ENCODE measurements at regions of chr16 and their contacts with region 1.

Region 1: GRCh38 chr16:22077700-22078313 is 14.5 kb upstream of the VWA3A start:
- DNase-seq: peak; percentile 37 to 78 (median 70)
- ATAC-seq: peak; percentile 69
- H3K4me3 ChIP-seq: no peak overlapping the region
- H3K4me3 Mint-ChIP-seq: no peak overlapping the region
- H3K27ac ChIP-seq: no peak overlapping the region
- H3K27ac Mint-ChIP-seq: no peak overlapping the region
- H3K4me1 ChIP-seq: no peaks in the 10 kb centered on the region
- H3K4me1 Mint-ChIP-seq: peaks cover 3% of the 10 kb centered on the region
- H3K27me3 ChIP-seq: no peaks in the 10 kb centered on the region
- H3K27me3 Mint-ChIP-seq: no peaks in the 10 kb centered on the region
- CTCF ChIP-seq: peak; percentile 78

Region 2: DNA sequence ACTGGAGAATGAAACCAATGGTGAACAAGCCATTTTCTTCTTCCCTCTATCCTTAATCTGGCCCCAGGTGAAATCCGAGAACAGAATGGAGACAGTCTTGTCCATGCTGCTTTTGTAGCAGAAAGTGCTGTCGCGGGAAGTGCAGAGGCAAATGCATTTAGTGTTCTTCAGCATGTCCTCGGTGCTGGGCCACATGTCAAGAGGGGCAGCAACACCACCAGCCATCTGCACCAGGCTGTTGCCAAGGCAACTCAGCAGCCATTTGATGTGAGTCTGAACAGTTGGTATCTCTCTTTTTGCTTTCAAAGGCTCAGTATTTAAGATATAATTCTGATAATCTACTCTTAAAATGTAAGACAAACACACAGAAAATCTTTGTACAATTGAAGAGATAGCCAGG is 106.0 kb before region 1 on chr16:
- CTCF ChIA-PET with region 1: no interaction called
- POLR2A ChIA-PET with region 1: no interaction called
- intact Hi-C with region 1: no loop called
- DNase-seq: no peak
- ATAC-seq: no peak
- H3K4me3 ChIP-seq: no peak overlapping the region
- H3K4me3 Mint-ChIP-seq: no peak overlapping the region
- H3K27ac ChIP-seq: no peak overlapping the region
- H3K27ac Mint-ChIP-seq: no peak overlapping the region
- H3K4me1 ChIP-seq: no peaks in the 10 kb centered on the region
- H3K4me1 Mint-ChIP-seq: no peaks in the 10 kb centered on the region
- H3K27me3 ChIP-seq: no peaks in the 10 kb centered on the region
- H3K27me3 Mint-ChIP-seq: no peaks in the 10 kb centered on the region
- CTCF ChIP-seq: no peak

Region 3: DNA sequence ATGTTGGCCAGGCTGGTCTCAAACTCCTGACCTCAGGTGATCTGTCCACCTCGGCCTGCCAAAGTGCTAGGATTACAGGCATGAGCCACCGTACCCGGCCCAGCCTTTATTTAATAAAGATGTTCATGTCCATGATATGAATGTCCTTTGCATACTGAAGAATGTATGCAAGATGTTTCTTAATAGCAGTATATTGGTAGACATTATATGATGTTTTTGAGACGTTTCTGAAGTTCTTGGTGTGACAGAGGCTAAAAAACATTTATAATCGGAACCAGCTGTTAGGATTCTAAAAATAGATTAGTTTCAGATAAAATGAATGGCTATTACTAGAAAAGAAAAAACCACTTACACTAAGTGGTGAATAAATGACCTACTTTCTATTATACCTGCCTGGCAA is 88.7 kb before region 1 on chr16:
- CTCF ChIA-PET with region 1: interaction called, 19 read pairs
- POLR2A ChIA-PET with region 1: interaction called, 3 read pairs
- intact Hi-C with region 1: no loop called
- DNase-seq: no peak
- ATAC-seq: no peak
- H3K4me3 ChIP-seq: no peak overlapping the region
- H3K4me3 Mint-ChIP-seq: no peak overlapping the region
- H3K27ac ChIP-seq: no peak overlapping the region
- H3K27ac Mint-ChIP-seq: no peak overlapping the region
- H3K4me1 ChIP-seq: no peaks in the 10 kb centered on the region
- H3K4me1 Mint-ChIP-seq: peaks cover 8% of the 10 kb centered on the region
- H3K27me3 ChIP-seq: no peaks in the 10 kb centered on the region
- H3K27me3 Mint-ChIP-seq: no peaks in the 10 kb centered on the region
- CTCF ChIP-seq: no peak

Region 4: GRCh38 chr16:22007509-22008214 is 70.1 kb before region 1 on chr16 and contains the start of gene MOSMO:
- CTCF ChIA-PET with region 1: interaction called, 158 read pairs
- POLR2A ChIA-PET with region 1: interaction called, 4 read pairs
- intact Hi-C with region 1: no loop called
- DNase-seq: peak; percentile 30 to 81 (median 67)
- ATAC-seq: peak; percentile 84
- H3K4me3 ChIP-seq: peak within 1 kb of the TSS; percentile 93 to 95
- H3K4me3 Mint-ChIP-seq: peak within 1 kb of the TSS; percentile 88
- H3K27ac ChIP-seq: peak within 1 kb of the TSS; percentile 70 to 75
- H3K27ac Mint-ChIP-seq: peak within 1 kb of the TSS; percentile 88
- H3K4me1 ChIP-seq: peaks cover 24% of the 10 kb centered on the region
- H3K4me1 Mint-ChIP-seq: peaks cover 46% of the 10 kb centered on the region
- H3K27me3 ChIP-seq: no peaks in the 10 kb centered on the region
- H3K27me3 Mint-ChIP-seq: no peaks in the 10 kb centered on the region
- CTCF ChIP-seq: no peak
- total RNA-seq, gene MOSMO: 2.4 TPM

Region 5: DNA sequence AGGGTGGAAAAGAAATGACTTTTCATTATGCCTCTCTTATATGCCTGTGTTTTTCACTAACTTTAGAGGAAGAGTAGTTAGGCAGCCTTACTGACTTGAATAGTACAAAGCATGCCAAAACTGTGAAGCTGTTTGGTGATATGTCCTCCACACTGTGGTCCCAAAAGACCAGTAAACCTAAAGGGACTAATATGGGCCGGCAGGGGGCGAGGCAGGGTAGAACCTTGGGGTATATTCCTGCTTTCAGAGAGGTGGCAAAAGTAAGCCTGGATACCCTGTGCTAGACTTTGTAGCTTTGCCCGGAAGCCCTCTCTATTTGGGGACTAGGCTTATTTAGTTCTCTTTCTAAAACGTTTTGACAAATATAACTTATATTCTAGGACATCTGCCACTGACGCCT is 21.9 kb before region 1 on chr16:
- CTCF ChIA-PET with region 1: interaction called, 21 read pairs
- POLR2A ChIA-PET with region 1: no interaction called
- intact Hi-C with region 1: no loop called
- DNase-seq: no peak
- ATAC-seq: no peak
- H3K4me3 ChIP-seq: no peak overlapping the region
- H3K4me3 Mint-ChIP-seq: no peak overlapping the region
- H3K27ac ChIP-seq: no peak overlapping the region
- H3K27ac Mint-ChIP-seq: no peak overlapping the region
- H3K4me1 ChIP-seq: no peaks in the 10 kb centered on the region
- H3K4me1 Mint-ChIP-seq: peaks cover 19% of the 10 kb centered on the region
- H3K27me3 ChIP-seq: no peaks in the 10 kb centered on the region
- H3K27me3 Mint-ChIP-seq: no peaks in the 10 kb centered on the region
- CTCF ChIP-seq: no peak

Region 6: GRCh38 chr16:22091758-22092600 is 14.2 kb after region 1 on chr16 and contains the start of gene VWA3A:
- CTCF ChIA-PET with region 1: interaction called, 41 read pairs
- POLR2A ChIA-PET with region 1: no interaction called
- intact Hi-C with region 1: no loop called
- DNase-seq: no peak
- ATAC-seq: no peak
- H3K4me3 ChIP-seq: no peak within 1 kb of the TSS
- H3K4me3 Mint-ChIP-seq: no peak within 1 kb of the TSS
- H3K27ac ChIP-seq: no peak within 1 kb of the TSS
- H3K27ac Mint-ChIP-seq: no peak within 1 kb of the TSS
- H3K4me1 ChIP-seq: no peaks in the 10 kb centered on the region
- H3K4me1 Mint-ChIP-seq: no peaks in the 10 kb centered on the region
- H3K27me3 ChIP-seq: peaks cover 0 to 3% of the 10 kb centered on the region in 2 experiments
- H3K27me3 Mint-ChIP-seq: peaks cover 11% of the 10 kb centered on the region
- CTCF ChIP-seq: no peak
- total RNA-seq, gene VWA3A: 0.17 to 0.62 TPM

Region 7: DNA sequence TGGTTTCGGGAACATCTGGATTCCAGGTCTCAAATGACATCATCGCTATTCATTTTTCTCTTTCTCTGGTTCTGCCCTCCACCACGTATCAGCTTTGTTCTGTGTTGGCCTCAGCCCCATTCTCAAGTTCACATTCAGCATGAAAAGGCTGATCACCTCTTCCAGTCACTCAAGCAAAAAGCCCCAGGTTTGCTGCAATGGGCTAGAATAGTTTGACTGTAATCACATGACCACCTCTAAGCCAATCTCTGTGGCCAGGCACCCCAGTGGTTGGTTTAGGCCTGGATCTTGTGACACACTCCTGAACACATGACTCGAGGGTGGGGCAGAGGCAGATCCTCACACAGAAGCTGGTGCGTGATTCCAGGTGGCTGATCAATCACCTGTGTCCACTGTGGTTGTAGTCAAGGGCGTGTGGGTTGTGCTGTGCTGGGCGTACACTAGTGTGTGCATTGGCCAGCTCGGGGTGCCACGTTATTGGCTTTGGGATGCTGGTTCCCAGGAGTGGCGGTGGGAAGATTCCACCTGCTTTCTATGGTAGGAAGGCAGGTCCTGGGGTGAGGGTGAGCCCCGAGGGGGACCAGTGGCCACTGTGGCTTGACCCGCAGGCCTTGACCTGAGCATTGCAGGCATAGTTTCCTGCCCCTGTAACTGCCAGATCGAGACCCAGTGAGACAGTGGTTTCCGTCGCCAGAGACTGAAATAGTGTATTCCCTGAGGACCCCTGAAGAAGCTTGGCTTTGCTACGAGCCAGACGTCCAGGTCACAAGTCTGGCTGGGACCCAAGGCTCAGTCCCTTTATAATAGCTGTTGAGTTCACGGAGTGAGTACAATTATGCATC is 140.3 kb after region 1 on chr16:
- CTCF ChIA-PET with region 1: no interaction called
- POLR2A ChIA-PET with region 1: no interaction called
- intact Hi-C with region 1: no loop called
- DNase-seq: peak in 2 of 9 experiments; percentile 31 to 40
- ATAC-seq: peak; percentile 73
- H3K4me3 ChIP-seq: no peak overlapping the region
- H3K4me3 Mint-ChIP-seq: no peak overlapping the region
- H3K27ac ChIP-seq: no peak overlapping the region
- H3K27ac Mint-ChIP-seq: no peak overlapping the region
- H3K4me1 ChIP-seq: no peaks in the 10 kb centered on the region
- H3K4me1 Mint-ChIP-seq: peaks cover 12% of the 10 kb centered on the region
- H3K27me3 ChIP-seq: no peaks in the 10 kb centered on the region
- H3K27me3 Mint-ChIP-seq: no peaks in the 10 kb centered on the region
- CTCF ChIP-seq: no peak

Region 8: DNA sequence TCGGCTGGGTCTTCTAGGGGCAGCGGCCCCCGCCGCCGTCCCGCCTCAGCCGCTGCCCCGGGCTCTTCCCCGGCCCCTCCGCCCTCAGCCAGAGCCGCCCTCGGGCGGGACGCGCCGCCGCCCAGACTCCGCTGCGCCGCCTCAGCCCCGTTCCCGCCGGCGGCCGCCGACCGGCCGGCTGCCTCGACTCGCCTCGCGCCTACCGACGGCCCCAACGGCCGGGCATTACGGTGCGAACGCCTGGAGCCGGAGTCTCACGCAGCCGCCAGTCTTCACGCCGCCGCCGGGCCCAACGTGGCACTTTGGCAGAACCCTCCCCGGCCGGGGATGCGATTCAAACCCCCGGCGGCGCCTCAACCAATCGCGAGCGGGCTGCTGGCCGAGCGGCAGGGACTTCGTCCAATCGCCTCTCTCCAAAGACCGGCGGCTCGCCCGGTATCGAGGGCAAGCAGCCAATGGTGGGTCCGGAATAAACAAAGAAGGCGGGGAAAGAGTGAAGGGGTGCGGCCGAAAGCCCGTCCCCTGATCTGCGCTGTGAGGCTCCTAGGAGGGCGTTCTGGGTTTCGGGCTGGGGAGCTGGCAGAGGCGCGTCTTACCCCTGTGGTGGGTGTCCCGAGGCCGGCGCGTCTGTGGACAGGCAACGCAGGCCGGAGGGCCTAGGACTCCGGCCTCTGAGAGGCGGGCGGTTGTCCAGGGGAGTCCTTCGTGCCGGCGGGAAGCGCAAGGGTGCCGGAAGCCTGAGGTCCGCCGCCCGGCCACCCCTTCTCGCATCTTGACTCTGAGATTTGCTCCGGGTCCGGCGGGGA is 296.7 kb after region 1 on chr16 and contains the start of gene CDR2:
- CTCF ChIA-PET with region 1: no interaction called
- POLR2A ChIA-PET with region 1: no interaction called
- intact Hi-C with region 1: no loop called
- DNase-seq: peak; percentile 96 to 99 (median 98)
- ATAC-seq: peak; percentile 92
- H3K4me3 ChIP-seq: peak within 1 kb of the TSS; percentile 60 to 71
- H3K4me3 Mint-ChIP-seq: peak within 1 kb of the TSS; percentile 97
- H3K27ac ChIP-seq: peak within 1 kb of the TSS; percentile 51 to 77
- H3K27ac Mint-ChIP-seq: peak within 1 kb of the TSS; percentile 95
- H3K4me1 ChIP-seq: peaks cover 34% of the 10 kb centered on the region
- H3K4me1 Mint-ChIP-seq: peaks cover 49% of the 10 kb centered on the region
- H3K27me3 ChIP-seq: no peaks in the 10 kb centered on the region
- H3K27me3 Mint-ChIP-seq: no peaks in the 10 kb centered on the region
- CTCF ChIP-seq: no peak
- total RNA-seq, gene CDR2: 119 to 120 TPM